ENCODE measurements at regions of chr9 and their contacts with region 1.

Region 1: GRCh38 chr9:121321016-121321503 is 49.0 kb downstream of the STOM start:
- DNase-seq: peak in 1 of 2 experiments; percentile 36
- ATAC-seq: no peak
- H3K4me3 ChIP-seq: no peak overlapping the region
- H3K27ac ChIP-seq: peak overlapping the region; percentile 81 to 92
- H3K4me1 ChIP-seq: peaks cover 67% of the 10 kb centered on the region
- CTCF ChIP-seq: no peak
- EP300 ChIP-seq: no peak
- POLR2A ChIP-seq: no peak
- RAD21 ChIP-seq: no peak

Region 2: GRCh38 chr9:121150188-121150587 is 170.9 kb before region 1 on chr9:
- CTCF ChIA-PET with region 1: no interaction called
- POLR2A ChIA-PET with region 1: no interaction called
- DNase-seq: no peak
- ATAC-seq: no peak
- H3K4me3 ChIP-seq: no peak overlapping the region
- H3K27ac ChIP-seq: no peak overlapping the region
- H3K4me1 ChIP-seq: no peaks in the 10 kb centered on the region
- CTCF ChIP-seq: no peak
- EP300 ChIP-seq: no peak
- POLR2A ChIP-seq: no peak
- RAD21 ChIP-seq: no peak

Region 3: GRCh38 chr9:121233906-121234901 is 86.9 kb before region 1 on chr9:
- CTCF ChIA-PET with region 1: interaction called, 12 read pairs
- POLR2A ChIA-PET with region 1: no interaction called
- DNase-seq: no peak
- ATAC-seq: no peak
- H3K4me3 ChIP-seq: no peak overlapping the region
- H3K27ac ChIP-seq: no peak overlapping the region
- H3K4me1 ChIP-seq: 0 out of 3 replicates have a peak, but pooled peaks cover 5% of the 10 kb centered on the region
- CTCF ChIP-seq: no peak
- EP300 ChIP-seq: no peak
- POLR2A ChIP-seq: no peak
- RAD21 ChIP-seq: no peak

Region 4: GRCh38 chr9:121286973-121287741 is 33.9 kb before region 1 on chr9:
- CTCF ChIA-PET with region 1: interaction called, 72 read pairs
- POLR2A ChIA-PET with region 1: interaction called, 3 read pairs
- DNase-seq: peak; percentile 96 to 97
- ATAC-seq: peak; percentile 90 to 92
- H3K4me3 ChIP-seq: no peak overlapping the region
- H3K27ac ChIP-seq: peak overlapping the region; percentile 92 to 93
- H3K4me1 ChIP-seq: peaks cover 61% of the 10 kb centered on the region
- CTCF ChIP-seq: peak; percentile 35; the same call in 1 of the 3 replicates
- EP300 ChIP-seq: peak in 1 of 2 experiments; percentile 45; a peak in 2 of 5 replicates
- POLR2A ChIP-seq: no peak; the same call in 1 of the 2 replicates
- RAD21 ChIP-seq: peak in 1 of 2 experiments; percentile 44; a peak in 3 of 5 replicates

Region 5: DNA sequence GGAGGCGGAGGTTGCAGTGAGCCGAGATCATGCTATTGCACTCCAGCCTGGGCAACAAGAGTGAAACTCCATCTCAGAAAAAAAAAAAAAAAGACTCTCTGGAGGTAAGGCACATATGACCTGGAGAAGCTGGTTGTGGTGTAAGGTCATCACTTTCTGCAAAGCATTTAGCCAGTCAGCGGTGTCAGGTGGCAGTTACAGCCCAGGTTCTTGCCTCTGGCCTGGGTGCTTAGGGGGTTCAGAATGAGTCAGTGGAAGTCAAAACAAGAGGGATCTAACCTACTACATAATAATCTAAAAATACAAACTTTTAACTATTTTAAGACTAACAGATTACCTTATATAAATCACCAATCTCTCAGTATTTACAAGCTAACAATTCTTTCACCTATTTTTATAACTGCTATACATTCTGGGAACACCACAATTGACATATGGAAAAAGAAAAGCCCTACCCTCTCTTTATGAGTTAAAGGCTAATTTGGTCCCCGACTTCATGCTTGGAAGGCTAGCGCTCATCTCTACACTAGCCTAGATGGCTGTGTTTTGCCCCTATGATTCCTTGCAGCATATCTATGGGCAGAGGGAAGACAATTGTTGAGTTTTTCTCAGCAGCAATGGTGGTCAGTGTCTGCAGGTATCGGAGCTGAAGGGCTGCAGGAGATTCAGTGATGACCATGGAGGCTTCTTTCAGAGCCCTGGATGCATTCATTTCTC is 19.8 kb after region 1 on chr9:
- CTCF ChIA-PET with region 1: interaction called, 62 read pairs
- POLR2A ChIA-PET with region 1: interaction called, 3 read pairs
- DNase-seq: no peak
- ATAC-seq: no peak
- H3K4me3 ChIP-seq: no peak overlapping the region
- H3K27ac ChIP-seq: no peak overlapping the region
- H3K4me1 ChIP-seq: no peaks in the 10 kb centered on the region
- CTCF ChIP-seq: no peak
- EP300 ChIP-seq: no peak
- POLR2A ChIP-seq: no peak
- RAD21 ChIP-seq: no peak

Region 6: GRCh38 chr9:121362813-121363621 is 42.0 kb after region 1 on chr9:
- CTCF ChIA-PET with region 1: interaction called, 29 read pairs
- POLR2A ChIA-PET with region 1: no interaction called
- DNase-seq: peak in 1 of 2 experiments; percentile 48
- ATAC-seq: peak; percentile 62 to 79; a peak in 5 of 6 replicates
- H3K4me3 ChIP-seq: no peak overlapping the region; the same call in 2 of the 3 replicates
- H3K27ac ChIP-seq: peak overlapping the region; percentile 55 to 77; a peak in 5 of 6 replicates
- H3K4me1 ChIP-seq: peaks cover 88% of the 10 kb centered on the region
- CTCF ChIP-seq: no peak
- EP300 ChIP-seq: no peak
- POLR2A ChIP-seq: no peak
- RAD21 ChIP-seq: no peak

Region 7: GRCh38 chr9:121424024-121424432 is 103.0 kb after region 1 on chr9:
- CTCF ChIA-PET with region 1: interaction called, 19 read pairs
- POLR2A ChIA-PET with region 1: no interaction called
- DNase-seq: no peak
- ATAC-seq: no peak
- H3K4me3 ChIP-seq: no peak overlapping the region
- H3K27ac ChIP-seq: no peak overlapping the region
- H3K4me1 ChIP-seq: no peaks in the 10 kb centered on the region
- CTCF ChIP-seq: no peak
- EP300 ChIP-seq: no peak
- POLR2A ChIP-seq: no peak
- RAD21 ChIP-seq: no peak

Measured in A549 (cell line).